ENCODE measurements at regions of chr5 and their contacts with region 1.

Region 1: GRCh38 chr5:140700177-140701144 is at the start of gene ZMAT2:
- DNase-seq: peak; percentile 89 to 98 (median 94)
- H3K4me3 ChIP-seq: peak within 1 kb of the TSS; percentile 48 to 91
- H3K4me3 Mint-ChIP-seq: peak within 1 kb of the TSS; percentile 95 to 99 (median 98)
- H3K27ac ChIP-seq: peak within 1 kb of the TSS; percentile 80
- H3K27ac Mint-ChIP-seq: peak within 1 kb of the TSS; percentile 91 to 99 (median 98)
- H3K4me1 ChIP-seq: peaks cover 18% of the 10 kb centered on the region
- H3K4me1 Mint-ChIP-seq: peaks cover 17 to 31% (median 23%) of the 10 kb centered on the region in 4 donors
- H3K27me3 ChIP-seq: no peaks in the 10 kb centered on the region
- H3K27me3 Mint-ChIP-seq: no peaks in the 10 kb centered on the region
- total RNA-seq, gene ZMAT2: 56.3 to 57.4 TPM

Region 2: DNA sequence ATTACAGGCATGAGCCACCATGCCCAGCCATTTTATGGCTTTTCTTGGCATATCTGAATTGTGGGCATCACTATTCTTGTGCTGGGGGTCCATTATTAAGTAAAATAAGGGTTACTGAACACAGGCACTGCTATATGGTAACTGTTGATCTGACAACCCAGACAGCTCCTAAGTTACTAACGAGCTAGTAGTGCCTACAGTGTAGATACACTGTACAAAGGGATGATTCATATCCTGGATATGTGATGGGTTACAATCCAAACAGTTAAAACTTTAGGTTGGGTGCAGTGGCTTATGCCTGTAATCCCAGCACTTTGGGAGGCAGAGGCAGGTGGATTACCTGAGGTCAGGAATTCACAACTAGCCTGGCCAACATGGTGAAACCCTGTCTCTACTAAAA is 71.8 kb before region 1 on chr5:
- CTCF ChIA-PET with region 1: no interaction called
- POLR2A ChIA-PET with region 1: no interaction called
- intact Hi-C with region 1: no loop called
- DNase-seq: no peak
- H3K4me3 ChIP-seq: no peak overlapping the region
- H3K4me3 Mint-ChIP-seq: no peak overlapping the region
- H3K27ac ChIP-seq: no peak overlapping the region
- H3K27ac Mint-ChIP-seq: no peak overlapping the region
- H3K4me1 ChIP-seq: peaks cover 13% of the 10 kb centered on the region
- H3K4me1 Mint-ChIP-seq: peaks cover 8 to 26% (median 14%) of the 10 kb centered on the region in 4 donors
- H3K27me3 ChIP-seq: no peaks in the 10 kb centered on the region
- H3K27me3 Mint-ChIP-seq: peaks cover 3% of the 10 kb centered on the region in 2 donors

Region 3: GRCh38 chr5:140664359-140665119 is 35.9 kb before region 1 on chr5 and contains the start of gene WDR55:
- CTCF ChIA-PET with region 1: interaction called, 3 read pairs
- POLR2A ChIA-PET with region 1: interaction called, 5 read pairs
- intact Hi-C with region 1: loop called (anchors 1 kb)
- DNase-seq: peak; percentile 94 to 99 (median 94)
- H3K4me3 ChIP-seq: peak within 1 kb of the TSS; percentile 90 to 98
- H3K4me3 Mint-ChIP-seq: peak within 1 kb of the TSS; percentile 96 to 99 (median 98)
- H3K27ac ChIP-seq: peak within 1 kb of the TSS; percentile 95
- H3K27ac Mint-ChIP-seq: peak within 1 kb of the TSS; percentile 98 to 99 (median 99)
- H3K4me1 ChIP-seq: peaks cover 20% of the 10 kb centered on the region
- H3K4me1 Mint-ChIP-seq: peaks cover 27 to 52% (median 34%) of the 10 kb centered on the region in 4 donors
- H3K27me3 ChIP-seq: no peaks in the 10 kb centered on the region
- H3K27me3 Mint-ChIP-seq: no peaks in the 10 kb centered on the region
- total RNA-seq, gene WDR55: 47.1 to 49.6 TPM

Region 4: DNA sequence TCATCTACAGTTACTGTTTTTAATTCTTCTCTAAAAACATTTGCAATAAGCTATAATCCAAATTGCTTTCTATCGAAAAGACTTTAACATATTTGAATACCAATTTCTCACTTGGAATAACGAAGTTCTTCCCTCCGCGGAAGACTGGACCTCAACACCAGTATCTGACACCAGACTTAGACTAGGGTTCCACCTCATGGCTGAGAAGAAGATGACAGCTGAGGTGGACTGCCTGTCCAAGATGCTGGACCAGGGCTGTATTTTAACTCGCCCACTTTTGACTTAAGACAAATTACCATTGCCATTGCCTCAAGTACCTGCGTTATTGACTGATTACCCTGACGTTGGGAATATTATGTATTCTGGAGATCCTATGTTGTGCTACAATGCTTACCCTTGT is 33.9 kb after region 1 on chr5:
- CTCF ChIA-PET with region 1: no interaction called
- POLR2A ChIA-PET with region 1: no interaction called
- intact Hi-C with region 1: no loop called
- DNase-seq: no peak
- H3K4me3 ChIP-seq: no peak overlapping the region
- H3K4me3 Mint-ChIP-seq: no peak overlapping the region
- H3K27ac ChIP-seq: no peak overlapping the region
- H3K27ac Mint-ChIP-seq: no peak overlapping the region
- H3K4me1 ChIP-seq: no peaks in the 10 kb centered on the region
- H3K4me1 Mint-ChIP-seq: peaks cover 0 to under 1% (median 0%) of the 10 kb centered on the region in 4 donors
- H3K27me3 ChIP-seq: no peaks in the 10 kb centered on the region
- H3K27me3 Mint-ChIP-seq: peaks cover 18 to 33% of the 10 kb centered on the region in 2 donors